ENCODE measurements at regions of chr14 and their contacts with region 1.

Region 1: GRCh38 chr14:64540208-64541157 is at the start of gene HSPA2:
- DNase-seq: peak; percentile 97 to 100
- H3K4me3 ChIP-seq: peak within 1 kb of the TSS; percentile 74
- H3K27ac ChIP-seq: peak within 1 kb of the TSS; percentile 84
- H3K4me1 ChIP-seq: peaks cover 37% of the 10 kb centered on the region
- H3K27me3 ChIP-seq: no peaks in the 10 kb centered on the region
- CTCF ChIP-seq: peak; percentile 77
- total RNA-seq, gene HSPA2: 11.0 and 14.3 TPM in 2 replicates

Region 2: GRCh38 chr14:64119500-64119899 is 421.0 kb before region 1 on chr14:
- CTCF ChIA-PET with region 1: interaction called, 3 read pairs
- POLR2A ChIA-PET with region 1: interaction called, 28 read pairs
- intact Hi-C with region 1: no loop called
- DNase-seq: no peak
- H3K4me3 ChIP-seq: no peak overlapping the region
- H3K27ac ChIP-seq: no peak overlapping the region
- H3K4me1 ChIP-seq: no peaks in the 10 kb centered on the region
- H3K27me3 ChIP-seq: no peaks in the 10 kb centered on the region
- CTCF ChIP-seq: no peak

Region 3: GRCh38 chr14:64503478-64504309 is 36.8 kb before region 1 on chr14 and contains the start of gene ZBTB25:
- CTCF ChIA-PET with region 1: no interaction called
- POLR2A ChIA-PET with region 1: interaction called, 9 read pairs
- intact Hi-C with region 1: loop called (anchors 1 kb)
- DNase-seq: peak; percentile 85 to 94
- H3K4me3 ChIP-seq: peak within 1 kb of the TSS; percentile 61
- H3K27ac ChIP-seq: peak within 1 kb of the TSS; percentile 93
- H3K4me1 ChIP-seq: peaks cover 55% of the 10 kb centered on the region
- H3K27me3 ChIP-seq: no peaks in the 10 kb centered on the region
- CTCF ChIP-seq: no peak
- total RNA-seq, gene ZBTB25: 18.6 and 22.9 TPM in 2 replicates

Region 4: DNA sequence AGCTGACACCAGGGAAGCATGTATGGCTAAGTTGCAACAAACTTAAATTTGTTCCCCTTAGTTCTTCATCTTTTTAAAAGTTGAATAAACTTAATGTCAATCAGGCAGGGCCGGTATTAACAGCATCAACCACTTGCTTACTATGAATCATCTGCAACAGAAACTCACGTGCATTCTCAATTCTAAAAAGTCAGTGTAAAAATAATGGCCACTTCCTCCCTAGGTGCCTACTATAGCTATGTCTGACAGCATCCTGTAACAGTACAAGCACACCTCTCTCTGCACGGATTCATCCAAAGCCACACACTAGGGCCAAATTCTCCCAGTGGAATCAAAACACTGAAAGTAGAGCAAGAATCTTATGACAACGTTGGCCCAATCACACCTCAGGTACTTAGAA is 57.9 kb after region 1 on chr14:
- CTCF ChIA-PET with region 1: no interaction called
- POLR2A ChIA-PET with region 1: no interaction called
- intact Hi-C with region 1: no loop called
- DNase-seq: no peak
- H3K4me3 ChIP-seq: no peak overlapping the region
- H3K27ac ChIP-seq: no peak overlapping the region
- H3K4me1 ChIP-seq: no peaks in the 10 kb centered on the region
- H3K27me3 ChIP-seq: no peaks in the 10 kb centered on the region
- CTCF ChIP-seq: no peak

Region 5: DNA sequence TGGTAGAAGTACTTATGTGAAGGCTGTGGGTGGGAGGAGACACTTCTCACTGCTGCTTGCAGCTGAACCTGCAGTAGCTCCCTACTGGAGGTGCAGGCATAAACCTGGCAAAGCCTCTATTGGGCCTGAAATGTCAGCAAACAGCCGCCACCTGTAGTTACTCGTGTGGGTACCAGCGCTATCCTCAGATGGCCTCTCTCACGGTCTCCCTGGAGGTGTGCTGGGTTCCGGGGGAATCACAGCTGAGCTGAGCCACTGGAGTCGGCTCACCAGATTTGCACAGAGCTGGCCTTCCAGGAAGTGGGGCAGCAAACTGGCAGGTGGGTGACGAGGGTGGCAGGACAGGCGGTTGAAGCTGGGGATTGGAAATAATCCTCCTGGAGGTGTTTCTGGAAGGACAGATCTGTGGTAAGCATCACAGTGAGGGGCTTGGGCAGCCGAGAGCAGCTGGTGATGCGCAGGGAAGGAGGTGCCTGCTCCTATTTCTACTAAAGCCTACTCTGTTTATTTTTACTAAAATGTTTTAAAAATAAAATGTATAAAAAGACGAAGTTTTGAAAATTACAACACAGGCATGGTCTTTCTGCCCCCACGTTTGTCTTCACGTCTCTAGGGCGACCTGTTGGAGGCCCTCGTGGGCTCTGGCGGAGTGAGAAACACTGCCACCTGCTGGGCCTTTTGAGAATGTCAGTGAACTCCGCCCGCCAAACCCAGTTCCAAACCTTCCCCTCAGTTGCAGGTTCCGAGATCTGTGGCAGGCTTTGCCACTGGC is 95.9 kb after region 1 on chr14:
- CTCF ChIA-PET with region 1: interaction called, 7 read pairs
- POLR2A ChIA-PET with region 1: interaction called, 5 read pairs
- intact Hi-C with region 1: loop called (anchors 1 kb)
- DNase-seq: peak in 1 of 2 experiments; percentile 68
- H3K4me3 ChIP-seq: no peak overlapping the region
- H3K27ac ChIP-seq: no peak overlapping the region
- H3K4me1 ChIP-seq: peaks cover 34% of the 10 kb centered on the region
- H3K27me3 ChIP-seq: no peaks in the 10 kb centered on the region
- CTCF ChIP-seq: peak; percentile 98

Region 6: GRCh38 chr14:64663174-64663573 is 122.7 kb after region 1 on chr14:
- CTCF ChIA-PET with region 1: no interaction called
- POLR2A ChIA-PET with region 1: interaction called, 11 read pairs
- intact Hi-C with region 1: no loop called
- DNase-seq: peak in 1 of 2 experiments; percentile 43
- H3K4me3 ChIP-seq: no peak overlapping the region
- H3K27ac ChIP-seq: no peak overlapping the region
- H3K4me1 ChIP-seq: no peaks in the 10 kb centered on the region
- H3K27me3 ChIP-seq: no peaks in the 10 kb centered on the region
- CTCF ChIP-seq: no peak

Region 7: DNA sequence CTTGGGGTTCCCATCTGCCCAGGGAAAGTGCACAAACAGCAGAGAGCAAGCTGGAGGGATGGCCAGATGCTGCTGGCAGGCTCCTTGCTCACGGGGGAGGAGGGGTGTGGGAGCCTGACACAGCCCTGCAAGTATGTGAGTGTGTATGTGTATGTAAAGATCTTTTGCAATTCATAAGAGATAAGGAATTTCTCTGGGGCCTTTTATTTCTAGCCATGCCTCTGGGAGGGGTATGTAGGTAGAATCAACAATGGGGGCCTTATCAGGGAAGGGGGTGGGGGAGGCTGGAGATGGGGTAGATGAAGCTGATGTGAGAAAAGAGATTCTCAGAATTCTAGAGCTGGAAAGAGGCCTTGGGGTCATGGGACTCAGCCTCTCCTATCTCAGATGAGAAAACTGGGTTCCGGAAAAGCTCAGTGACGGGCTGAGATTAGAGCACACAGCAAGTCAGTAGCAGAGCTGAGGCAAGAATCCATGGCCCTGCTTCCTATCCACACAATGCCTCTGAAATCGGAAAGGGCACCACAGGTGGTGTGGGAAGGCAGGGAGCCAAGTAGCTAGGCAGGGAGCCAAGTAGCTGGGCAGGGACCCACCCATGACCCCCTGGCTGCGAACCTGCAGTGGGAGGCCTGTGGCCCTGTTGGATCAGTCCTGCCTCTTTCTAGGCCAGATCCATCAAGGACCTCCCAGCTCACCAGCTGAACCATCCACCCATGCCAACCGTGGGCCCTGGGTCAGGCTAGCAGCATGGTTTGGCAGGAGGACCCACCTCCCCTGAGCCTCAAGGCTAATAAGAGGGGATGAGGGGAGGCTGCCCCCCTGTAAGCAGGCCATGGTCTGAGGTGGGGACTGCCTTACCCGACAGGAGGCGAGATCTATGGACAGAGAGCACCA is 218.5 kb after region 1 on chr14:
- CTCF ChIA-PET with region 1: interaction called, 3 read pairs
- POLR2A ChIA-PET with region 1: interaction called, 11 read pairs
- intact Hi-C with region 1: loop called (anchors 2 kb)
- DNase-seq: peak; percentile 77 to 85
- H3K4me3 ChIP-seq: no peak overlapping the region
- H3K27ac ChIP-seq: peak overlapping the region; percentile 34
- H3K4me1 ChIP-seq: peaks cover 79% of the 10 kb centered on the region
- H3K27me3 ChIP-seq: no peaks in the 10 kb centered on the region
- CTCF ChIP-seq: no peak

Region 8: GRCh38 chr14:64817631-64818030 is 277.1 kb after region 1 on chr14:
- CTCF ChIA-PET with region 1: no interaction called
- POLR2A ChIA-PET with region 1: interaction called, 27 read pairs
- intact Hi-C with region 1: no loop called
- DNase-seq: peak; percentile 35 to 50
- H3K4me3 ChIP-seq: no peak overlapping the region
- H3K27ac ChIP-seq: no peak overlapping the region
- H3K4me1 ChIP-seq: 0 out of 2 replicates have a peak, but pooled peaks cover 3% of the 10 kb centered on the region
- H3K27me3 ChIP-seq: peaks cover 10% of the 10 kb centered on the region; the same call in 1 of the 2 replicates
- CTCF ChIP-seq: no peak